A673 (cell line): ENCODE measurements at regions of chr3 and their contacts with region 1.

Region 1: GRCh38 chr3:47732143-47732542 is 49.5 kb downstream of the SMARCC1 start:
- DNase-seq: no peak
- H3K4me3 ChIP-seq: no peak overlapping the region
- H3K27ac ChIP-seq: no peak overlapping the region
- H3K4me1 ChIP-seq: no peaks in the 10 kb centered on the region
- H3K27me3 ChIP-seq: no peaks in the 10 kb centered on the region
- CTCF ChIP-seq: no peak

Region 2: DNA sequence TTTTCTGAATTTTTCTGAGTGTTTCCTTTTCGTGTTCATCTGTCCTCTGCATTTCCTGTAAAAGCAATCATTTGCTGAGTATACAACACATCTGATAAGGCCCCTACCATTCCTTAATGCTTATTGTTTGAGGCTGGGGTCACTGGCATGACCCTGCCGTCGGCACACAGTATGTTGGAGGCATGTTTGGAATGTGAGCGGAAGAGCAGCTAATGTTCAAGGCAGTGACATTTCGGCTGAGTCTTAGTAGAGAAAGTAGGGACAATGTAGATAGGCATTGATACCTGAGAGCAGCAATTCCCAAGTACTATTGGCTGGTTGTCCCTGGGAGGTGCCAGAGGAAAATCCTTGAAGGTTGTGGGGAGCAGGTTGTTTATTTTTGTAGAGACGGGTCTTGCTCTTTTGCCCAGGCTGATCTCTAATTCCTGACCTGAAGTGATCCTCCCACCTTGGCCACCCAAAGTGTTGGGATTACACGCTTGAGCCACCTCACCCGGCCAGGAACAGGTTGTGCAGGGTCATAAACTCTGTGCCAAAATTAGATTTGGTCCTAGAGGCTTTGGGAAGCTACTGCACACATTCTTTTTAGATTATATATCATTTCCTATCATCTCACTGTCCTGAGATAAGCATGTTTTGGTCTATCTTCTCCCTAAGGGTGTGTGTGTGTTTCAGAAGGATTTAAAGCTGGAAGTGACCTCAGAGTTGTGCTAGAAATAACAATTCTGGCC is 337.8 kb before region 1 on chr3:
- CTCF ChIA-PET with region 1: no interaction called
- POLR2A ChIA-PET with region 1: no interaction called
- intact Hi-C with region 1: no loop called
- DNase-seq: no peak
- H3K4me3 ChIP-seq: no peak overlapping the region
- H3K27ac ChIP-seq: no peak overlapping the region
- H3K4me1 ChIP-seq: no peaks in the 10 kb centered on the region
- H3K27me3 ChIP-seq: no peaks in the 10 kb centered on the region
- CTCF ChIP-seq: no peak

Region 3: DNA sequence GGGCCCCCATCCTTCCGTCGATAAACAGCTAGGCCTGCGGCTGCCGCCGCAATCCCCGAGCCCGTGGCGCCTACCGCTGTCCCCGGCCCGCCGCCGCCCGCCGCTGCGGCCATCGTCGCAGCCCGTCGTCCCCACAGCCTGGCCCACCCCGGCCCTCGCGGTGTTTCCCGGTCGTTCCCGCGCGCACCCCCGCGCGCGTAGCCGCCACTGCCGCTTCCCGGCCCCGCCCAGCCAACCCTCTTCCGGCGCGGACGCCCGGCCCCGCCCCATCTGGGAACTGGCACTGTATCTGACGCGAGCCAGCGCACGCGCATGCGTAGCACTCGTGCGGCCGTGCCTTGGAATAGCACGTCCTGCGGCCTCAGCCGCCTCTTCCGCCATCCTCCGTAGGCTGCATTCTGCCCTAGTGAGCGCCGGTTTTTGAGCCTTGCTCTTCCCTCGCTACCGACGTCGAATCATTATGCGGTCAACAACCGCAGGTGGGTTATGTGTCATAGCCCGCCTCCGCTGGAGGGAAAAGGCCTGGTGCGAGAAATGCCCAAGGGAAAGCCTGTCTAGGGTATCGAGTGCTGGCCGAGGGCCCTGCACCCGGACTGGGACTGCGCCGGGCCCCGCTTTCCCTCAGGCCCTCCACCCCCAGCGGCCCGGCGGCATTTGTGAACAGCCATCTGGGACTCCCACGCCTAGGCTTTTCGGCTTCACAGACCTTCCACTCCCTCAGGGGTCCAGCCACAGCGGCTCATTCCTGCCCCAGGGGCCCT is 49.7 kb after region 1 on chr3 and contains the start of gene SMARCC1:
- CTCF ChIA-PET with region 1: no interaction called
- POLR2A ChIA-PET with region 1: interaction called, 10 read pairs
- intact Hi-C with region 1: no loop called
- DNase-seq: peak; percentile 93
- H3K4me3 ChIP-seq: peak within 1 kb of the TSS; percentile 75
- H3K27ac ChIP-seq: peak within 1 kb of the TSS; percentile 93
- H3K4me1 ChIP-seq: no peaks in the 10 kb centered on the region
- H3K27me3 ChIP-seq: no peaks in the 10 kb centered on the region
- CTCF ChIP-seq: no peak
- total RNA-seq, gene SMARCC1: 126 and 129 TPM in 2 replicates

Region 4: DNA sequence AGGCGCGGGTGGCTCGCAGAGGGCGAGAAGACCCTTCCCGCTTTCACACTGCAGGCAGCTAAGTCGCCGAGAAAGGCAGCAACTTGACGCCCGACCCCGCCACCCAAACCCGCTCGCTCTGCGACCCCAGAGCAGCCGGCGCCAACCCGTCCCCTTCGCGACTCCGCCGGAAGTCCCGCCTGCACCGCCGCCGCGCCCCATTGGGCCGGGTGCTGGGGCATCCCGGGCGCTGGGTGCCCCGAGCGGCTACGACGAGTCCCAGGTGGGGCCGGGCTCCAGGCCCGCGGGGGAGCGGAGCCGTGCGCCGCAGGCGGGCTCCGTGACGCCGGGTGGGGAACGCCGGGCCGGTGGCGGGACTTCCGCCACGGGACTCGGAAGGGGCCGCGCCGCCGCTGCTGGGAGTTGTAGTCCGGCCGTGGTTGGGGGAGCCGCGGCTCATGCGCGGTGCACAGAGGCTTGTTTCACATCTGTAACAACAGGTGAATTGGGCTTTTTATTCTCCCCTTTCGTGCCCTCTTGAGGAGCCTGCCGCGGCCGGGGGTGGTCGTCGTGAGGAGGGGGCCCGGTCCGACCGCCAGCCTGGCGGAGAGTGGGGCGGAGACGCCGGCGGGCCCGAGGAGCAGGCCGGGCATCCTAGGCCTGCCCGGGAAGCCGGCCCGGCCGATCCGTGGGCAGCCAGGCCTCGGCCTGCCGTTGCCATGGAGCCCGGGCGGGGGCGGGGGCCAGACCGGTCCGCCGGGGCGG is 70.8 kb after region 1 on chr3 and contains the start of gene DHX30:
- CTCF ChIA-PET with region 1: no interaction called
- POLR2A ChIA-PET with region 1: no interaction called
- intact Hi-C with region 1: no loop called
- DNase-seq: peak; percentile 80
- H3K4me3 ChIP-seq: peak within 1 kb of the TSS; percentile 76
- H3K27ac ChIP-seq: peak within 1 kb of the TSS; percentile 85
- H3K4me1 ChIP-seq: no peaks in the 10 kb centered on the region
- H3K27me3 ChIP-seq: no peaks in the 10 kb centered on the region
- CTCF ChIP-seq: no peak
- total RNA-seq, gene DHX30: 80.2 and 84.5 TPM in 2 replicates